Activated CD4-positive, alpha-beta memory T cell treated with anti-CD3 and anti-CD28 coated beads for 36 hours (primary cell): ENCODE measurements at regions of chr2 and their contacts with region 1.

Region 1: DNA sequence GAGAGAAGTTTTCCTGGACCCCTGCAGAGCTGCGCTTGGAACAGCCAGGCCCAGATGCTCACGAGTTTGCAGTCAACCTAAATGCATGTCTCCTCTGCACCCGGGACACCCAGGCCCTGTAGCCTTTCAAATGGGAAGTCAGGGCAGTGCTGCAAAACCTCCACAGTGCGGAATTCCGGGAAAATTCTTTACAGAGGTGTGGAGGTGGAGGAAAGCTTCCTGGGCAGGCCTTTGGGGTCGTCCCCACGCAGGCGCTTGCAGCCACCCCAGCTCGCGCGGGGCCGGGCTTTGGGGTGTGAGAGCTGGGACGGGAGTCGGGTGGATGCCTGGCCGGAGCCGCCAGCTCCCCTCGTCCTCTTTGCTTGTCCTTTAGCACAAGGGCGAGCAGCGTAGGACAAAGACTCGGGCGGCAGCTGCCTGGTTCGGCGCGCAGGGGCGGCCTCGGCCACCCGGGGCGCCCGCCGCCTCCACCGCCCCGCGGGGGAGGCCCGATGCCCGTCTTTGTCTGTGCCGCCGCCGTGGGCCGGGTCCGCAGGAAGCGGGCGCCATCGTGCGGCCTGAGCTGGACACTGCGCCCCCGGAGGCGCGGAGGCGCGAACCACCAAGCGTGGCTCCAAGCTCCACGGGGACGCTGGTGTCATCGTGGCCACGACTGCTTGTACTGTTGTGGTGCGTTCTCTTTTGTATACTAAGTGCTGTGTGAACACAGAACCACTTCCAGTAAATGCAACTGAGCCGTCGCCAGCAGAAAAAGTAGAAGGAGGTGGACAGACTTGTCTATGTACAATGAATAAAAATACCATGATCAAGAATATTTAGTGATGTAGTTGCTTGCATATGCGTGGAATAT is 28.2 kb upstream of the BCL11A start:
- DNase-seq: peak; percentile 74
- H3K4me3 Mint-ChIP-seq: no peak overlapping the region
- H3K27ac Mint-ChIP-seq: no peak overlapping the region
- H3K4me1 Mint-ChIP-seq: peaks cover 4% of the 10 kb centered on the region
- H3K27me3 Mint-ChIP-seq: peaks cover 28% of the 10 kb centered on the region

Region 2: GRCh38 chr2:60446413-60447267 is 135.0 kb before region 1 on chr2:
- CTCF ChIA-PET with region 1: no interaction called
- POLR2A ChIA-PET with region 1: no interaction called
- intact Hi-C with region 1: no loop called
- DNase-seq: no peak
- H3K4me3 Mint-ChIP-seq: no peak overlapping the region
- H3K27ac Mint-ChIP-seq: no peak overlapping the region
- H3K4me1 Mint-ChIP-seq: no peaks in the 10 kb centered on the region
- H3K27me3 Mint-ChIP-seq: peaks cover 4% of the 10 kb centered on the region

Region 3: DNA sequence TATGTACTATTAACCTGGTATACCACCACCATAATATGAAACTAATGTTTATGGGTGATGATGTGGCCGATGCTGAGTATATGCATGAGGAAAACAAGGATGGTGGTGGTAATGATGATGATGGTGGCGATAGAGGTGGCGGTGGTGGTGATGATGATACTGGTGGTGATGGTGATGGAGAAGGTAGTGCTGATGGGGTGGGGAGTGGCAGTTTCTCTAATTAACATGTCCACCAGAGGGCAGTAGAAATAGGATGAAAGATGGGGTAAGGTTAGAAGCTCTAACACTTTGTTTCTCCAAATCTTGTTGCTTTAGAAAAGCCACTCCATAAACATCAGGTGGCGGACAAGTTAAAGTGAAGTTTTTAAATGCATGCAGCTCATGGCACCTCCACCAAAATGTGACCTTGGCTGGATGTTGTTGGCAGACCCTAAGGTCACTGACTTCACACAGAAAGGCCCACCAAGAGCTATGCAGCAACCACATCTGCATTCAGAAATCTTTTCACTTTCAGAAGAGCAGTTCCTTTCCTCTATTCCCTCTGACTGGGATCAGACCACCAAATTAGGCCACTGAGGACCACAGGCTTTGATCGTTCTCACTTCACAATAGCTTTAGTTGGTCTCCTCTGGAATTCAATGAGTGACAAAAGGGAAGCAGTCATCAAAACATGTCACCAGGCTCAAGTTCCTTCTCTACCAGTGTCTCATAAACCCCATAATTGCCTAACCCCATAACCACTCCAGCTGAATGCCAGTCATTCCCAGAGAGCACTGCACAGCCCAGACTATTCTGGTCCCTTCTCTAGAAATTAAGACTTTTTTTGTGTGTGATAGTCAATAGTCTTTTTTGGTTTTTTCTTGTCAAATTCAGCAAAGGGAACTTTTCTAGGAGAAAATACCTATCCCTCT is 20.7 kb before region 1 on chr2:
- CTCF ChIA-PET with region 1: interaction called, 64 read pairs
- POLR2A ChIA-PET with region 1: no interaction called
- intact Hi-C with region 1: loop called (anchors 1 kb)
- DNase-seq: no peak
- H3K4me3 Mint-ChIP-seq: no peak overlapping the region
- H3K27ac Mint-ChIP-seq: no peak overlapping the region
- H3K4me1 Mint-ChIP-seq: peaks cover 10% of the 10 kb centered on the region
- H3K27me3 Mint-ChIP-seq: peaks cover 58% of the 10 kb centered on the region

Region 4: GRCh38 chr2:60569680-60570111 is 12.0 kb before region 1 on chr2:
- CTCF ChIA-PET with region 1: interaction called, 25 read pairs
- POLR2A ChIA-PET with region 1: no interaction called
- intact Hi-C with region 1: no loop called
- DNase-seq: no peak
- H3K4me3 Mint-ChIP-seq: no peak overlapping the region
- H3K27ac Mint-ChIP-seq: no peak overlapping the region
- H3K4me1 Mint-ChIP-seq: peaks cover 8% of the 10 kb centered on the region
- H3K27me3 Mint-ChIP-seq: peaks cover 43% of the 10 kb centered on the region